IMR-90 (cell line): ENCODE measurements at regions of chr3 and their contacts with region 1.

Region 1: DNA sequence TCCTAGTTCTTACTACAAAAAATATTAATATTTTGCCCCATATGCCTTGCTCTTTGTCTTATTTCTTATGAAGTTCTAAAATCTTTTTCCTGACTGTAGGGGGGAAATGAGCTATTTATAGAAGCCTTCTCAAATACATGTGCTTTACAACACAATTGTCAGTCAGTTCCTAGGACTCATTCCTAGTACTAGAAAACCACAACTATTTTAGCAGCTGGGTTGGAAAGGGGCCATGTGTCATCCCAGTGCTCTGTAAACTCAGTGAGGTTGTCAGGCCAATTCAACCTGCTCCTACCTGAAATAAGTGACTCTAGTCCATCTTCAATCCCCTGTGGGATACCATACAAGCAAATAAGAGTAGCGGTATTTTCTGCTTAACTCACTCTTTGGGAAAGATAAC is 153.8 kb downstream of the ULK4 start:
- DNase-seq: peak; percentile 64
- ATAC-seq: peak; percentile 62; the same call in 1 of the 2 replicates
- H3K4me3 ChIP-seq: no peak overlapping the region
- H3K27ac ChIP-seq: no peak overlapping the region
- H3K4me1 ChIP-seq: no peaks in the 10 kb centered on the region
- H3K27me3 ChIP-seq: no peaks in the 10 kb centered on the region
- CTCF ChIP-seq: no peak
- POLR2A ChIP-seq: no peak
- RAD21 ChIP-seq: no peak

Region 2: GRCh38 chr3:41792806-41793205 is 15.3 kb before region 1 on chr3:
- CTCF ChIA-PET with region 1: interaction called, 3 read pairs
- POLR2A ChIA-PET with region 1: no interaction called
- dilution Hi-C with region 1: no loop called
- in situ Hi-C with region 1: no loop called
- intact Hi-C with region 1: loop called (anchors 1 kb)
- DNase-seq: no peak
- ATAC-seq: no peak
- H3K4me3 ChIP-seq: no peak overlapping the region
- H3K27ac ChIP-seq: no peak overlapping the region
- H3K4me1 ChIP-seq: no peaks in the 10 kb centered on the region
- H3K27me3 ChIP-seq: no peaks in the 10 kb centered on the region
- CTCF ChIP-seq: no peak
- POLR2A ChIP-seq: no peak
- RAD21 ChIP-seq: no peak

Region 3: DNA sequence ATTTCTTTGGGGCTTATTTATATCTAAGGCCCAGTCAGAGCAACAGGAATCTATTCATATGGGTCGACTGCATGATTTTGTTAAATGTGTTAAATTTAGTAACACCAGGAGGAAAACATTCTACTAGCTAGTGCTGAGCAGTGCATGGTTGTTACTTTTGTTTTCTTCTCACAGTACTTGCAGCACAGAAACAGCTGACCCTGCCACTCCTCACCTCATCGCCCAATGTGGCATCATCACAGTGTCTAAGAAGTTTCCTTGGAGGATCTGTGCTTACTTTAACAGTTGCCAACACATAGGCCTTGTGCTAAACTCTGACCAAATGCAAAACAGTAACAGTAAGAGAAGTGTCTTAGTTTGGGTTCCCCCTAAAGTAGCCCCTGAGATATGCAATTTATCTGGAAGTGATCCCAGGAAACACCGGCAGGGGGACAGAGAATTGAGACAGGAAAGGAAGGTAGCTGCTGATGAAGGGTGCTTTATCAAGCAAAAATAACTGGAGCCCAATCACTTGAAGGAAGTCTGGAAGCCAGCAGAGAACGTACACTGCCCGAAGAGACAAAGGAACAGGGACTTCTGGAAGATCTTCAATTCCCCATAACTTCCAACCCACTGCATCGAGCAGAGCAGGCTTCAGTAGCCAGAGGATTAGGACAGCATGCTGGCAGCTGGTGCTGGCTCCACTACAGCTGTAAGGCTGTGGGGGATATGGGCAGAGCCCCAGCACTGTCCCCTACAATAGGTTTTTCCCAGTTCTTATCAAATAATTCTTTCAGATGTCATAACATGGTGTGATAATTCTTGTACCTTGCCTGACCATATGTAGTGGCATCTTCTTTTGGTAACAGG is 189.8 kb after region 1 on chr3:
- CTCF ChIA-PET with region 1: no interaction called
- POLR2A ChIA-PET with region 1: no interaction called
- dilution Hi-C with region 1: no loop called
- in situ Hi-C with region 1: no loop called
- intact Hi-C with region 1: no loop called
- DNase-seq: peak; percentile 3
- ATAC-seq: peak; percentile 24; the same call in 1 of the 2 replicates
- H3K4me3 ChIP-seq: no peak overlapping the region
- H3K27ac ChIP-seq: no peak overlapping the region
- H3K4me1 ChIP-seq: no peaks in the 10 kb centered on the region
- H3K27me3 ChIP-seq: no peaks in the 10 kb centered on the region
- CTCF ChIP-seq: peak; percentile 48
- POLR2A ChIP-seq: no peak
- RAD21 ChIP-seq: peak; percentile 45

Region 4: DNA sequence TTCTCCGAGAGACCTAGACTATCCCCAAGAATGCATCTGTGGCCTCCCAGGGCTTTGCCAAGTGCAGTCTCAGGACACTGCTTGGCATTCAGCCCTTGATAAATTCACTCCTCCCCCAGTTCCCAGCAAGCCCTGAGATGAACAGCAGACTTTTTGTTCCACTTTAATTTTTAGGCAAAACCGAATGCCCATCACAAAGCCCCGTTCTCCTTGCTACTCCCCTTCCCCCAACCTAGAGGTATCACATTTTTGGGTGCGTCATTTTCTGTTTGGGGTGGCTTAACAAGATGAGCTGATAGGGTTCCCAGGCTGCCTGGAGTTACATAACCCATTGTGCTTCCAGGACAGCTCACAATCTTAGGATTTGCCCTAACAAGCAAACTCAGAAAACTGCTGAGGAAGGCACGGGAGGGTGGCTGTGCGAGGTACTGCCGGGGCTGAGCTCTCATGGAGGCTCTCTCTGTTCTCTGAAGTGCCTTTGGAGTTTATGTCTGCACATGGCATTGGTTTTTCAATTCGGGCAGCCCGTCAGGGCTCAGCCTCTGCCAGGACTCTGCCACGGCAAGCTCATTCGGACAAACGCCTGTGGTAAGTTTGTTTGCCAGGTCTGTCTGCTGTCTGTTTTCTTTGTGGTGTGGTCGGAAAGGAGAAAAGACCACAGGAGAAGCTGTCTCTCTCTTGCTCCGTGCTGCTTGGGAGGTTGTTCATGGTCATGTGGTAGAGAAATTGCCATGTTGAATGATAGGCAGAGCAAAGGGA is 283.0 kb after region 1 on chr3 and contains the start of gene TRAK1:
- CTCF ChIA-PET with region 1: no interaction called
- POLR2A ChIA-PET with region 1: no interaction called
- dilution Hi-C with region 1: no loop called
- in situ Hi-C with region 1: no loop called
- intact Hi-C with region 1: no loop called
- DNase-seq: no peak
- ATAC-seq: no peak
- H3K4me3 ChIP-seq: no peak within 1 kb of the TSS
- H3K27ac ChIP-seq: no peak within 1 kb of the TSS
- H3K4me1 ChIP-seq: peaks cover 5% of the 10 kb centered on the region
- H3K27me3 ChIP-seq: no peaks in the 10 kb centered on the region
- CTCF ChIP-seq: no peak
- POLR2A ChIP-seq: no peak
- RAD21 ChIP-seq: no peak
- total RNA-seq, gene TRAK1: 26.7 and 28.1 TPM in 2 replicates